ENCODE measurements at regions of chr3 and their contacts with region 1.

Region 1: GRCh38 chr3:141471160-141471559 is 15.7 kb upstream of the RASA2 start:
- DNase-seq: no peak
- H3K4me3 ChIP-seq: no peak overlapping the region
- H3K27ac ChIP-seq: no peak overlapping the region
- H3K4me1 ChIP-seq: no peaks in the 10 kb centered on the region
- H3K27me3 ChIP-seq: no peaks in the 10 kb centered on the region
- CTCF ChIP-seq: no peak

Region 2: GRCh38 chr3:141561426-141562034 is 90.4 kb after region 1 on chr3:
- intact Hi-C with region 1: loop called (anchors 5 kb)
- DNase-seq: peak in 3 of 5 donors; percentile 40 to 89 (median 75)
- H3K4me3 ChIP-seq: no peak overlapping the region
- H3K27ac ChIP-seq: no peak overlapping the region
- H3K4me1 ChIP-seq: peaks cover 0 to 5% (median 0%) of the 10 kb centered on the region in 3 donors
- H3K27me3 ChIP-seq: no peaks in the 10 kb centered on the region
- CTCF ChIP-seq: peak; percentile 97

Region 3: DNA sequence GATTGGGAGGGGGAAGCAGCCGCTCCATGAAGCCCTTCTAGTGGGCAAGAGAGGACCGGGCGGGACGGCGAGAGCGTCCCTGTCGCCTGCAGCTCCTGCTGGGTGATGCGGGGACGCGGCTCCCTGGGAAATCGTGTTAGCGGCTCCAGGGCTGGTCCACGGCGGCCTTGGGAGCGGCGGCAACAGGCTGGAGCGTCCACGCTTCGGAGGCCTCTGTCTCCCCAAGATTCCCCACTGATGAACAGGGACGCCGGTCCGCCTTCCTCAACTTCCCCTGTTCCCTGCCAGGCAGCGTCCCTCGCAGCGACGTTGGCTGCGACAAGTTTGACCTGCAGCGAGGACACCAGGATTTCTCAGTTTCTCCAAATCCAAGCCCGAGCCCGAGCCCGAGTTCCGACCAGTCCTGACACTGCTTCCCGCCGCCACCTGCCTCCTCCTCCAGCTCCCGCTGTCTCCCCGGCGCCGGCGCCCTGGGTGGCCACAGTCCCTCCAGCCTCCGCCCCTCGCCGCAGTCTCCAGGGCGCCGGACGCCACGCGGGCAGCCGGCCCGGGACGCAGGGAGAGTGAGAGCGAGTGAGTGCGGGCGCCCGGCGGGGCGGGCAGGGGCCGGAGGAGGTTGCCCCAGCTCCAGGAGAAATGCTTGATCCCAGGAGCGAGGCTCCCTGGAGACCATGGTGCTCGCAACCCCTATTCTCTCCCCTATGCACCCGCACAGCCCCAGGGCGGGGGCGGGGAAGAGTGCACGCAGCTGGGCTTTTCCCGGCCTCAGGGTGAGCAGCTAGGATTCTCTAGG is 188.9 kb after region 1 on chr3:
- intact Hi-C with region 1: no loop called
- DNase-seq: peak; percentile 64 to 85 (median 75)
- H3K4me3 ChIP-seq: peak overlapping the region; percentile 60 to 79 (median 66)
- H3K27ac ChIP-seq: peak overlapping the region; percentile 17 to 26
- H3K4me1 ChIP-seq: peaks cover 0 to 18% (median 17%) of the 10 kb centered on the region in 3 donors
- H3K27me3 ChIP-seq: no peaks in the 10 kb centered on the region
- CTCF ChIP-seq: no peak

Measured in kidney (tissue), 22 donors.